ENCODE measurements at regions of chr3 and their contacts with region 1.

Region 1: GRCh38 chr3:51682079-51682478 is 11.0 kb downstream of the TEX264 start:
- DNase-seq: peak; percentile 91
- ATAC-seq: peak; percentile 84
- H3K4me3 Mint-ChIP-seq: peak overlapping the region; percentile 69
- H3K27ac Mint-ChIP-seq: peak overlapping the region; percentile 91
- H3K4me1 Mint-ChIP-seq: peaks cover 92% of the 10 kb centered on the region
- H3K27me3 Mint-ChIP-seq: no peaks in the 10 kb centered on the region

Region 2: DNA sequence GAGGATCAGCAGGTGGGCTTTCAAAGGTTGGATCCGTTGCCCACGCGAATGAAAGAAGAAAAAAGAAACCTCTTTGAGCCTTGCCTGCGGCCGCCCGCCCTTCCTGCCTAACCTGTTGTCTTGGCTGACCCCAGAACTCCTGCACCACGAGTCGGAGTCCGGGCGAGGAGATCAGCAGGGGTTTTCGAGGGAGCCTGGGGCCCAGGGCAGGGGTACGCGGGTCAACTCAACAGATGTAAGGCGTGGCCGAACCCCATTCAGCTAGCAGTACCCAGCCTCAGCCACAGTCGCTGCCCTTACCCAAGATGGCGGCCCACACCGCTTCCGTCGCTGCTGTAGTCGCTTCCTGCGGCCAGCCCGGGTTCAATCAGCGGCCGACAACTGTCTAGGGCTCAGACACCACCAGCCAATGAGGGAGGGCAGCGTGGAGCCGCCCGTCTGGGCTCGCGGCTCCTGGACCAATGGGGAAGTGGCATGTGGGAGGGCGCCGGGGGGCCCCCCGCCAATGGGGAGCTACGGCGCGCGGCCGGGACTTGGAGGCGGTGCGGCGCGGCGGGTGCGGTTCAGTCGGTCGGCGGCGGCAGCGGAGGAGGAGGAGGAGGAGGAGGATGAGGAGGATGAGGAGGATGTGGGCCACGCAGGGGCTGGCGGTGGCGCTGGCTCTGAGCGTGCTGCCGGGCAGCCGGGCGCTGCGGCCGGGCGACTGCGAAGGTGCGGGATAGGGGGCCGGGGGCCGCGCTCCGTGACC is 297.2 kb before region 1 on chr3 and contains the start of gene MANF:
- CTCF ChIA-PET with region 1: interaction called, 28 read pairs
- DNase-seq: peak; percentile 99
- ATAC-seq: peak; percentile 96
- H3K4me3 Mint-ChIP-seq: peak within 1 kb of the TSS; percentile 99
- H3K27ac Mint-ChIP-seq: peak within 1 kb of the TSS; percentile 98
- H3K4me1 Mint-ChIP-seq: peaks cover 52% of the 10 kb centered on the region
- H3K27me3 Mint-ChIP-seq: no peaks in the 10 kb centered on the region
- total RNA-seq, gene MANF: 140 to 182 TPM

Region 3: DNA sequence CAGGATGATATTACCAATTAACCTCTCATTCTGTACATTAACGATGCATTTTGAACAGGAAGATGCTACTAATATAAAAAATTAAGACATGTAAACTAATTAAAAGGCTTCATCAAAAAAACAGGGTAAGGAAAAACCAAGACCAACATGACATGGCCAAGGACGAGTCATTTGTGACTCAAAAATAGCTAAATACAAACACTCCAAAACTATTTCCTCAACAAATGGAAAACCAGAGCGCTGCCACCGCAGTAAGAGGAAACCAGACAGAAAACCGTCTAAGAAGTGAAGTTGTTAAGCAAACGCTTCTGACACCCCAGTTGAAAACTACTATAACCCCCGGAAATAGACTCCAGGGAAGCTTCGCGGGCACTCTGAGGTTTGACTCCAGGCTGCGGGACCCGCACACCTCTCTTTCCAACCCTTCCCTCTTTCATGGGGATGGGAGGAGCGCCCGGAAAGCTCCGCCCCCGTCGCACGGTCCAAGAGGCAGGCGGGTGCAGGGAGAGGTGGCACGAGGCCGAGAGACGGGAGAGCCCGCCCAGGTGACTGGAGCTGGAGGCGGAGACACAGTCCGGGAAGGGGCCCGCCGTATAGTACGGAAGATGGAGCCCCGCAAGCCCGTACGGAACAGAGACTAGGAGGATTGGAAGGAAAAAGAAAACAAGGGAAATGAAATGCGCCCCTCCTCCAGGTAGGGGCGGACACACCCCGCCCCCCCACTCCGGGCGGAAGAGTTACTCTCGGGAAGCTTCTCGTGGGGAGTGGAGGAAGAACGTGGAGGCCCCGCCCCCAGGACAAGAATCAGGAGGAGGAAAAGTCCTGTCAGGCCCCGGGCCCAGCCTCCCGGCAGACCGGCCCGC is 183.0 kb before region 1 on chr3:
- CTCF ChIA-PET with region 1: interaction called, 222 read pairs
- DNase-seq: peak; percentile 93
- ATAC-seq: peak; percentile 73
- H3K4me3 Mint-ChIP-seq: peak overlapping the region; percentile 99
- H3K27ac Mint-ChIP-seq: peak overlapping the region; percentile 92
- H3K4me1 Mint-ChIP-seq: peaks cover 25% of the 10 kb centered on the region
- H3K27me3 Mint-ChIP-seq: no peaks in the 10 kb centered on the region

Region 4: DNA sequence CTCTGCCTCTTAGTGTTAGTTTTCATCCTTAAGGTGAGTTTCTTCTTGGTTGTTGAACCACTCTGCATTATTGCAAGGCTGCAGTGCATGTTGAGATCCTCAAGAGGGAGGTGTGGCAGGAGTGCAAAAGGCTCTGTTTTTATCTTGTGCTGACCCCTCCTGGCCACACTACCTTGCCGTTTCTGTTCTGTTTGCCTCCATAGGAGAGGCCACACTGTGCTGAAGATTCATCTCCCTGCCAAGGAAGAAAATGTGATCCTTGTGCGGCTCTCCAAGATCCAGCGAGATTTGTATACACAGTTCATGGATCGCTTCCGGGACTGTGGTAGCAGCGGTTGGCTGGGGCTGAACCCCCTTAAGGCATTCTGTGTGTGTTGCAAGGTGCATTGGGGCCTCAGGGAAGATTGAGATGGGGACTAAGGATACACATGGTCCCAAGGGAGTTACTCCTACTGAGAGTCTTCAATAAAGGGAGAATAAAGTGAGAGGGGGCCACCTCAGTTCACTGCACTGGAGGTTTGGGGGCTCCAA is 44.1 kb before region 1 on chr3:
- CTCF ChIA-PET with region 1: interaction called, 24 read pairs
- DNase-seq: peak; percentile 59
- ATAC-seq: peak; percentile 67
- H3K4me3 Mint-ChIP-seq: no peak overlapping the region
- H3K27ac Mint-ChIP-seq: no peak overlapping the region
- H3K4me1 Mint-ChIP-seq: no peaks in the 10 kb centered on the region
- H3K27me3 Mint-ChIP-seq: no peaks in the 10 kb centered on the region

Region 5: GRCh38 chr3:51670823-51671733 is 11.0 kb before region 1 on chr3 and contains the start of gene TEX264:
- CTCF ChIA-PET with region 1: interaction called, 269 read pairs
- DNase-seq: peak; percentile 93
- ATAC-seq: peak; percentile 72
- H3K4me3 Mint-ChIP-seq: peak within 1 kb of the TSS; percentile 89
- H3K27ac Mint-ChIP-seq: peak within 1 kb of the TSS; percentile 87
- H3K4me1 Mint-ChIP-seq: peaks cover 61% of the 10 kb centered on the region
- H3K27me3 Mint-ChIP-seq: no peaks in the 10 kb centered on the region
- total RNA-seq, gene TEX264: 58.8 to 66.5 TPM

Region 6: GRCh38 chr3:51718547-51719409 is 36.7 kb after region 1 on chr3:
- CTCF ChIA-PET with region 1: interaction called, 21 read pairs
- DNase-seq: peak; percentile 88
- ATAC-seq: peak; percentile 90
- H3K4me3 Mint-ChIP-seq: no peak overlapping the region
- H3K27ac Mint-ChIP-seq: peak overlapping the region; percentile 60
- H3K4me1 Mint-ChIP-seq: peaks cover 36% of the 10 kb centered on the region
- H3K27me3 Mint-ChIP-seq: no peaks in the 10 kb centered on the region

Region 7: GRCh38 chr3:51751287-51751686 is 69.2 kb after region 1 on chr3:
- CTCF ChIA-PET with region 1: no interaction called
- DNase-seq: no peak
- ATAC-seq: no peak
- H3K4me3 Mint-ChIP-seq: no peak overlapping the region
- H3K27ac Mint-ChIP-seq: no peak overlapping the region
- H3K4me1 Mint-ChIP-seq: peaks cover 14% of the 10 kb centered on the region
- H3K27me3 Mint-ChIP-seq: peaks cover 22% of the 10 kb centered on the region

Region 8: GRCh38 chr3:52108302-52109232 is 426.5 kb after region 1 on chr3:
- CTCF ChIA-PET with region 1: no interaction called
- DNase-seq: no peak
- ATAC-seq: no peak
- H3K4me3 Mint-ChIP-seq: no peak overlapping the region
- H3K27ac Mint-ChIP-seq: no peak overlapping the region
- H3K4me1 Mint-ChIP-seq: no peaks in the 10 kb centered on the region
- H3K27me3 Mint-ChIP-seq: no peaks in the 10 kb centered on the region

Measured in activated CD8-positive, alpha-beta memory T cell treated with anti-CD3 and anti-CD28 coated beads, Interleukin-2, amount 10 ng/mL, durations not matched to agents 7 days and 5 days (primary cell).